Activated T-helper 2 cell treated with anti-CD3 and anti-CD28 coated beads, Interferon-gamma antibody, Interleukin-2, Interleukin-4, amounts not matched to agents 10 μg/mL and 5 μg/mL and 100 μg/mL, durations not matched to agents 14 hours and 24 hours and 36 hours (primary cell): ENCODE measurements at regions of chr11 and their contacts with region 1.

Region 1: DNA sequence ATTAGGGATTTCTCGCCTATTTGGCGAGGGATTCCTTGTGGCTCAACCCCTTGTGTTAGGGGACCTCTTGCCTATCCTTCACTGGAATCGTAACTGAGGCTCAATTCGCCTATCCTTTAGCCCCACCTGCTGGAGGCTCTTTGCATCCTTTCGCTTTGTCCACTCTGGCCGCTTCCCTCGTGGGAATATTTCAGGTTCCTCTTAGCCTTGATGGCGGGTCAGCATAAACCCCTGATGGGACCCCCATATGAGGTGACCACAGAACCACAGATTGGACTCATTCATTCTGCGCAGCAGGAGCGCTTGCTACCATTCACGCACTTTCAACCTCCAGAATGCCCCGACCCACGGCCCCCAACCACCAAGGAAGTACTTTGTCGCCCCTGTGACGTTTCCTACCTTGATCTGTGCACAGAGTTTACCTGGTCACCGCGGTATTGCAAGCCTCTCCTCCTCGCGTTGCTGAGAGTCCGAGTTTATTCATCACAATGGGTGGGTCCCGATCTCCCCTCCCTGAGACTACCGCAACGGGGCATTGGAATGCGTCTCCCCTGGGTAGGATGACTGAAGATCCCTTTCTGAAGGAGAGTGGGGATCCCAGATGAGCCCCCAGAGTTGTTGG is at the start of gene OR52N2:
- DNase-seq: peak; percentile 53
- H3K4me3 Mint-ChIP-seq: peak within 1 kb of the TSS; percentile 84
- H3K27ac Mint-ChIP-seq: no peak within 1 kb of the TSS
- H3K4me1 Mint-ChIP-seq: peaks cover 12% of the 10 kb centered on the region
- H3K27me3 Mint-ChIP-seq: peaks cover 20% of the 10 kb centered on the region
- total RNA-seq, gene OR52N2: not detected in 2 replicates

Region 2: GRCh38 chr11:5123802-5124521 is 684.6 kb before region 1 on chr11:
- intact Hi-C with region 1: loop called (anchors 5 kb)
- DNase-seq: peak; percentile 11
- H3K4me3 Mint-ChIP-seq: no peak overlapping the region
- H3K27ac Mint-ChIP-seq: no peak overlapping the region
- H3K4me1 Mint-ChIP-seq: no peaks in the 10 kb centered on the region
- H3K27me3 Mint-ChIP-seq: no peaks in the 10 kb centered on the region

Region 3: GRCh38 chr11:5476184-5476819 is 332.3 kb before region 1 on chr11:
- intact Hi-C with region 1: loop called (anchors 1 kb)
- DNase-seq: no peak
- H3K4me3 Mint-ChIP-seq: no peak overlapping the region
- H3K27ac Mint-ChIP-seq: no peak overlapping the region
- H3K4me1 Mint-ChIP-seq: no peaks in the 10 kb centered on the region
- H3K27me3 Mint-ChIP-seq: no peaks in the 10 kb centered on the region

Region 4: DNA sequence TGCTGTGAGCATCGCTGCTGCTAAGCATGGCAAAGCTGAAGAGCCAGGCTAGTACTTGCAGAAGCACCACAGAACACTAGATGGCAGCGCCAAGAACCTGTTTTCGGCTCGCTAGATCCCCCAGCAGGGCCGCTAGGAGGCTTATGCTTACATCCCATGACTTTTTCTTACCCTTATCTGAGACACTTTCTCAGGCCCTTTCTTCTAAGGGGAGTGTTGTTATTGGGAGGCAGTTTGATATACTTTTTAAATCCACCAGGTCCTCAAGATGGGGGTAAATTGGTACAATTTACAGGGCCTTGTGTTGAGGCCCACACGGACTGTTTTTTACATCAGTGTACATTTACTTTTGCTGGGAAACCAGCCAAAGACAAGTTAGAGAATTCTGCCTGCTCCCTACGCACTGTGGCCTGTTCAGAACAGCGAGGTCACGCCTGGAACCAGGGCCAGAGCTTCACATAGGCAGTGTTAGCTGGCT is 208.2 kb before region 1 on chr11:
- intact Hi-C with region 1: loop called (anchors 1 kb)
- DNase-seq: peak; percentile 44
- H3K4me3 Mint-ChIP-seq: no peak overlapping the region
- H3K27ac Mint-ChIP-seq: no peak overlapping the region
- H3K4me1 Mint-ChIP-seq: peaks cover 10% of the 10 kb centered on the region
- H3K27me3 Mint-ChIP-seq: peaks cover 2% of the 10 kb centered on the region

Region 5: GRCh38 chr11:5620646-5621521 is 187.7 kb before region 1 on chr11:
- intact Hi-C with region 1: no loop called
- DNase-seq: no peak
- H3K4me3 Mint-ChIP-seq: no peak overlapping the region
- H3K27ac Mint-ChIP-seq: no peak overlapping the region
- H3K4me1 Mint-ChIP-seq: peaks cover 17% of the 10 kb centered on the region
- H3K27me3 Mint-ChIP-seq: no peaks in the 10 kb centered on the region

Region 6: GRCh38 chr11:5684646-5685362 is 123.8 kb before region 1 on chr11 and contains the start of gene TRIM5:
- intact Hi-C with region 1: loop called (anchors 2 kb)
- DNase-seq: peak; percentile 76
- H3K4me3 Mint-ChIP-seq: peak within 1 kb of the TSS; percentile 95
- H3K27ac Mint-ChIP-seq: peak within 1 kb of the TSS; percentile 96
- H3K4me1 Mint-ChIP-seq: peaks cover 31% of the 10 kb centered on the region
- H3K27me3 Mint-ChIP-seq: no peaks in the 10 kb centered on the region
- total RNA-seq, gene TRIM5: 12.4 and 14.1 TPM in 2 replicates